ENCODE measurements at regions of chrX and their contacts with region 1.

Region 1: DNA sequence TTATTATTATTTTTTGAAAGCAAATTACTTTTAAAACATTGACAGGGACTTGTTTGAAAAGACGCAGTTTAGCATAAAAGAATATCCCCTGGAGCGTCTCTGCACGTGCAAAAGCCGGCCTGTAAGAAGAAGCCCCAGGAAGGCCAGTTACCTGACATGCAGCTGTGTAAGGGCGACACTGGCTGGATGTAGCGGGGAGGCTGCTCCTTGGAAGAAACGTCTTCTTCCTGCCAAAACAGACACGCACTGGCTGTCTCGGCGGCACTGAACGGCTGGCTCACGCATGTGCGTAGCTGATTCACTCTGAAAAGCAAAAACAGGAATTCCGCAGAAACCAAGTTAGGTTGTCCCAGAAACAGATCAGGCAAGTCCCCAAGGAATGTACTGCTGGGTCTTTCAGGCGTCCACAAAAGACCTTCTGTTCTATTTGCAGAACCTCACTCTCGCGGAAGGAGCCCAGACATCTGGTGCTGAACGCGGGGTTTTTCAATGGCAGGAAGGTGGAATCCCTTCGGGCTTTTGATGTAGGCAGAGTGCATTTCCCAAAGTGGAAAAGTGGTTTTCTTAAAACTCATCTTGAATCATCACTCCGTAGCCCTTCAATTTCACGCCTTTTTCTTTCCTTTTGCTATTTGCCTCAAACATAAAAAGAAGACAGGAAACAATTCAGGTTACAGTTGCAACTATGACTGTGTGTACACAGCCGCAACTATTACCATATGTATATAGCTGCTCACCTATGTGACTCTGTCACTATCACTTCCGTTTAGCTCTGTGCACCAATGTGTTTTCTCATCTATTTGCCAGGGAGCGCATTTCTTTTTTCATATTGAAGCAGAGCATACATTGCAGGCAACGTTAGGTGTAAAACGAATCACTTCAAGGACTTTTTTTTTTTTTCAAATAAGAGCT is 38.1 kb upstream of the ARSH start:
- DNase-seq: no peak
- ATAC-seq: no peak
- H3K4me3 ChIP-seq: no peak overlapping the region
- H3K27ac ChIP-seq: no peak overlapping the region
- H3K4me1 ChIP-seq: 0 out of 2 replicates have a peak, but pooled peaks cover 6% of the 10 kb centered on the region
- H3K27me3 ChIP-seq: no peaks in the 10 kb centered on the region
- CTCF ChIP-seq: no peak
- EP300 ChIP-seq: no peak
- POLR2A ChIP-seq: no peak
- RAD21 ChIP-seq: no peak

Region 2: DNA sequence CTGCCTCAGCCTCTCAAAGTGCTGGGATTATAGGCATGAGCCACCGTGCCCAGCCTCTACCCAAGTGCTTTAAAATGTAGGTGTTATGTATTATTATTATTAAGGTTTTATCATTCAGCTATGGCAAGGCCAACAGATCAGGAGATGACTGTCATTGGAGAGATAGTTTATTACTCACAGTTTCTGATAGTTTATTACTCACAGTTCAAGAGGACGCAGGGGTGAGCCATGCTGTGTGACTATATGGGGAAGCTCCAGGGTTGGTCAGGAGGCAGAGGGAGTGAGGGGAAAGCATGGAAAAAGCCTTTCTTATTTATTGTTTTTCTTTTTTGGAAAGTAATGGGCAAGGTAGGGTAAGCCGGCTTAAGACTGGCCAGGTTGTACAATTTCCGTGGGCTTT is 13.7 kb before region 1 on chrX:
- CTCF ChIA-PET with region 1: no interaction called
- POLR2A ChIA-PET with region 1: interaction called, 10 read pairs
- in situ Hi-C with region 1: no loop called
- intact Hi-C with region 1: no loop called
- DNase-seq: no peak
- ATAC-seq: no peak
- H3K4me3 ChIP-seq: no peak overlapping the region
- H3K27ac ChIP-seq: no peak overlapping the region
- H3K4me1 ChIP-seq: peaks cover 5% of the 10 kb centered on the region; the same call in 1 of the 2 replicates
- H3K27me3 ChIP-seq: no peaks in the 10 kb centered on the region
- CTCF ChIP-seq: no peak
- EP300 ChIP-seq: no peak
- POLR2A ChIP-seq: no peak
- RAD21 ChIP-seq: no peak

Measured in HepG2 (cell line).